ENCODE measurements at regions of chr6 and their contacts with region 1.

Region 1: GRCh38 chr6:153032255-153032882 is 29.9 kb upstream of the MTRF1L start:
- DNase-seq: peak in 1 of 2 donors; percentile 53
- H3K4me3 ChIP-seq: no peak overlapping the region
- H3K27ac ChIP-seq: no peak overlapping the region
- H3K4me1 ChIP-seq: peaks cover 0 to 18% (median 1%) of the 10 kb centered on the region in 4 donors
- H3K27me3 ChIP-seq: no peaks in the 10 kb centered on the region
- CTCF ChIP-seq: peak in 3 of 7 experiments; percentile 22 to 36 (median 33)
- EP300 ChIP-seq: no peak
- POLR2A ChIP-seq: no peak

Region 2: DNA sequence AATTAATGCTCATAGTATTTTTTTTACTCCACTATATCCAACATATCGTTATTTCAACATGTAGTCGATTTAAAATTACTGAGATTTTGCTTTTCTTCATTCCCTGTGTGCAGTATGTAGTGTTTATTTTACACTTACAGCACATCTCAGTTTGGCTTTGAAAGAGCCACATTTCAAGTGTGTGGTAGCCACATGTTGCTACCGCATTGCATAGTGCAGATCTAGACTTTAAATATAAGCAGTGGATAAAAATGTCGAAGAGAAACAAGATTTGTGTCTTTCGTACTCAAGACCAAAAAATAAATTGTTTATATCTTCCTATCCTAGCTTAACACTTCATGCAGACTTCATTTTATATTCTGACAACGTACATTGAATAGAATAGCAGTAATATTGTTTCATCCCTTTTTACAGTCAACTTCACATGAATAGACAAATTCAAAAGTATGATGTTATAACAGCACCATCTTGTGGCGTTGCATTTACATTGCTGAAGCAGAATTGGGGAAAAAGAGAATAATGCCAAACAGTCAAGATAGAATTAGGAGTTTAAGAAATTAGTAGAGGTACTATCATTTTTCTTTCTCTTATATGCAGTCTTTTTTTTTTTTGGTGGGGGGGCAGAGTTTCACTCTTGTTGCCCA is 79.4 kb before region 1 on chr6:
- intact Hi-C with region 1: no loop called
- DNase-seq: peak in 1 of 2 donors; percentile 52
- H3K4me3 ChIP-seq: no peak overlapping the region
- H3K27ac ChIP-seq: no peak overlapping the region
- H3K4me1 ChIP-seq: peaks cover 0 to 10% (median 2%) of the 10 kb centered on the region in 4 donors
- H3K27me3 ChIP-seq: peaks cover 0 to 21% (median 8%) of the 10 kb centered on the region in 3 donors
- CTCF ChIP-seq: peak in 3 of 7 experiments; percentile 19 to 27 (median 21)
- EP300 ChIP-seq: no peak
- POLR2A ChIP-seq: no peak

Region 3: DNA sequence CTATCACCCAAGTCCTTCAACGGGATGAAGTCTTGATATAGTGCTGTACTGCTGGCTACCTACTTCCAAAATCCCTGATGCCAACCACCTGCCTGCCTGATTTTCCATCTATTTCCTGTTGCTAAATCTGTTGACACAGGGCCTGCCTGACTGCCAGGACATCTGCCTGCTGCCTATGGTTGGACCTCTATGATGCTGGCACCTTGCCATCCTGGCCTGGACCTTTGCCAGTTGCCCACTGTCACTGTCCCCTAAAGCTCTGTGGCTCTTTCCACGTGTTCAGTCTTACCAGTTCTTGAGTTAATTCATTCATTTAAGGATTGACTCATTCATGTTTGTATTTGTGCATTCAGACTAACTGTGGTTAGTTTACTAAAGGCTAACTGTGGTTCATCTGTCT is 107.9 kb after region 1 on chr6:
- intact Hi-C with region 1: no loop called
- DNase-seq: peak in 1 of 2 donors; percentile 28
- H3K4me3 ChIP-seq: no peak overlapping the region
- H3K27ac ChIP-seq: no peak overlapping the region
- H3K4me1 ChIP-seq: no peaks in the 10 kb centered on the region
- H3K27me3 ChIP-seq: no peaks in the 10 kb centered on the region
- CTCF ChIP-seq: no peak
- EP300 ChIP-seq: no peak
- POLR2A ChIP-seq: no peak

Region 4: GRCh38 chr6:153150752-153151440 is 118.5 kb after region 1 on chr6:
- intact Hi-C with region 1: no loop called
- DNase-seq: peak in 1 of 2 donors; percentile 31
- H3K4me3 ChIP-seq: no peak overlapping the region
- H3K27ac ChIP-seq: no peak overlapping the region
- H3K4me1 ChIP-seq: no peaks in the 10 kb centered on the region
- H3K27me3 ChIP-seq: no peaks in the 10 kb centered on the region
- CTCF ChIP-seq: no peak
- EP300 ChIP-seq: no peak
- POLR2A ChIP-seq: no peak

Region 5: DNA sequence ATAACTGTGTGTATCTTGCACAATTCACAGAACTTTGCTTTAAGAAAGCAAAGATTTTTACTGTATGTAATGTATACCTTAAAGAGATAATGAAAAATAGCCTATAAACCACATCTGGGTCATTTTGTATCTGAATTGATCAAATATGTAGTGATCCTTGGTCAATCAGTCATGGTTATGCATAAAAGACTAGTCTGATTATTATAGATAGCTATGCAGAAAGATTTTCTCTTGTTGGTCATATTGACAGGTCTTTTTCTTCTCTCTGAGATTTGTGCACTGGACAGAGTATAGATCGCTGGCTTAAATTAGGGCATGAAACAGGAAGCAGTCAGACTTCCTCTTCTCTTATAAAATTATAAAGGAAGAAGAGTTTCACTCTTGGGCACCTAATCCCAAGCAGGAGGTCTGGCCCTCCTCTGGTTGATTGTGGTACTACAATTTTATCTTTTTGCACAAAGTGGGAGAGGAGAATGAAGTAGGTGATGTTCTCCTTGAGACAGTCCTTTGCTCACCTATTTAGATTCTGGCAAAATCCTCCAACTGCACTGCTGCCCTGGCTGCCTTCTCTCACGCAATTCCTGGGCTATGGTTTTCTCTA is 479.6 kb after region 1 on chr6:
- intact Hi-C with region 1: loop called (anchors 5 kb)
- DNase-seq: peak in 1 of 2 donors; percentile 41
- H3K4me3 ChIP-seq: no peak overlapping the region
- H3K27ac ChIP-seq: no peak overlapping the region
- H3K4me1 ChIP-seq: no peaks in the 10 kb centered on the region
- H3K27me3 ChIP-seq: no peaks in the 10 kb centered on the region
- CTCF ChIP-seq: peak in 5 of 7 experiments; percentile 31 to 57 (median 39)
- EP300 ChIP-seq: no peak
- POLR2A ChIP-seq: no peak

Measured in stomach (tissue), 19 donors.